ENCODE measurements at regions of chr10 and their contacts with region 1.

Region 1: DNA sequence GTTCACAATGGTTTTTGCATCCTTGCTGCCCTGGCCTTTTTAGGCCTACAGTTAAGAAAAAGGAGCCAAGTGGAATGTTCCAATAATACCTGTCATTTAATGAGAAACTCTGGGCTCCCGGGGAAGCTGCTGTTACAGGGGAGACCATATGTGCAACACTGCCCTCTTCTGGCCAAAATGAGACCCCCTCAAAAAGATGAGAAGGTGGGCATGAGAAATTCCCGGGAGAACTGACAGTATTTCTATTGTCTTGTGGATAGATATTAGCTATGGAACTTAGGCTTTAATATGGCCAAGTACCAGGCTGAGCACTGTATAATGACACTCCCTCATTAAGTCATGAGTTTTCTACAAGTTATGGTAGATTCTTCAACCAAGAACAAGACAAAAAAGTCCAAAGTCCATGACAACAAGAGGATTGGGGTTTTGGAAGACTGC is 99.4 kb downstream of the CCDC3 start:
- DNase-seq: peak; percentile 65
- H3K4me3 ChIP-seq: no peak overlapping the region
- H3K27ac ChIP-seq: no peak overlapping the region
- H3K4me1 ChIP-seq: peaks cover 4% of the 10 kb centered on the region
- H3K27me3 ChIP-seq: no peaks in the 10 kb centered on the region
- CTCF ChIP-seq: peak; percentile 79 to 91 (median 82)
- POLR2A ChIP-seq: no peak

Region 2: GRCh38 chr10:12782537-12782936 is 119.6 kb before region 1 on chr10:
- intact Hi-C with region 1: loop called (anchors 5 kb)
- DNase-seq: peak; percentile 13
- H3K4me3 ChIP-seq: no peak overlapping the region
- H3K27ac ChIP-seq: no peak overlapping the region
- H3K4me1 ChIP-seq: peaks cover 2% of the 10 kb centered on the region
- H3K27me3 ChIP-seq: no peaks in the 10 kb centered on the region
- CTCF ChIP-seq: peak; percentile 45 to 72 (median 64)
- POLR2A ChIP-seq: no peak

Region 3: DNA sequence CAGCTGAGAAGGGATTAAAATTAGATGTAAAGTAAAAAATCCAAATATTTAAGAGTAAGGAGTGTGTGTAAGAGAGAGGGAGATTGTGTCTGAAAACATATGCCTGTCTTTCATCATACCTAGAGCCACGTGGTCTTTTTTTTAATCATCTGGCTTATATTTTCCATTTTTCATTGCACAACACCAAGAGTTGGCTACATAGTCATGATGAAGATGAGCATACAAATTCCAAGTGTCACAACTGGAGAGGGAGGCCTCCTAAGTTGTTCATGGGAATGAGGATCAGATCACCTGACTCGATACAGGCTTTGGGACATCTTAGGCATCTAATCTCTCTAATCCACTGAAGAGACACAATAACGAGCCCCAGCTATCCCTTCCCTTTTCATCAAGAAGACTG is 146.6 kb after region 1 on chr10:
- intact Hi-C with region 1: no loop called
- DNase-seq: no peak
- H3K4me3 ChIP-seq: no peak overlapping the region
- H3K27ac ChIP-seq: no peak overlapping the region
- H3K4me1 ChIP-seq: no peaks in the 10 kb centered on the region
- H3K27me3 ChIP-seq: no peaks in the 10 kb centered on the region
- CTCF ChIP-seq: no peak
- POLR2A ChIP-seq: no peak